ENCODE measurements at regions of chr5 and their contacts with region 1.

Region 1: GRCh38 chr5:6377905-6378765 is at the start of gene MED10:
- DNase-seq: peak; percentile 79 to 97
- H3K4me3 ChIP-seq: peak within 1 kb of the TSS; percentile 80 to 86
- H3K27ac ChIP-seq: peak within 1 kb of the TSS; percentile 84 to 95
- H3K4me1 ChIP-seq: peaks cover 4 to 12% of the 10 kb centered on the region in 2 donors
- H3K27me3 ChIP-seq: no peaks in the 10 kb centered on the region
- CTCF ChIP-seq: no peak
- total RNA-seq, gene MED10: 2.9 TPM

Region 2: GRCh38 chr5:5492087-5492933 is 885.8 kb before region 1 on chr5:
- intact Hi-C with region 1: loop called (anchors 5 kb)
- DNase-seq: no peak
- H3K4me3 ChIP-seq: no peak overlapping the region
- H3K27ac ChIP-seq: no peak overlapping the region
- H3K4me1 ChIP-seq: no peaks in the 10 kb centered on the region
- H3K27me3 ChIP-seq: no peaks in the 10 kb centered on the region
- CTCF ChIP-seq: peak in 2 of 3 experiments; percentile 65 to 82

Region 3: DNA sequence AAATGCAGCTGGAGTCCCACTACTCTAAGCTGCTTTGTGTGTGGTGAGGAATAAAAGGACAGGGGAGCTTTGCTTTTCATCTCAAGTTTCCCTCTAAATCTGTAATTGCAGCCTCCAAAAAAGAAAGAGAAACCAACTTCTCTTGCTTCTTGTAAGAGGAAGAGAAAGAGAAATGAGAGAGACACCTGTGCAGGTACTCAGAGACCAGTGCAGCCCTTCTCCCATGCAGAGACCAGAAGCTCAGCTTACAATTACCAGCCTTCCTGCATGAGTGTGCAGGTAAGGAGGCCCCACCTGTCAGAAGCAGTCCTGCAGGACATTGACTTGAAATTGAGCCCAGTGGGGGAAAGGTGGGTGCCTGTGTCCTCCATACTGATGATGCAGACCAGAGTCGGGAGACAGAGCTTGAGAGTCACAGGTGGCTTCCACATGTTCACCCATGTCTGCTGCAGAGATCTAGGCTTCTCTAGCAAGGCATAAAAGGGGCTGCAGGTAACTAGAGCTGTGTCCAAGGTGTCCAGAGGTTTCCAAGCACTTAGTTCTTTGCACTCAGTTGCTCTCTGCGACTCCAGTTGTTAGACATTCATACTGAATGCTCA is 15.6 kb after region 1 on chr5:
- intact Hi-C with region 1: no loop called
- DNase-seq: no peak
- H3K4me3 ChIP-seq: no peak overlapping the region
- H3K27ac ChIP-seq: no peak overlapping the region
- H3K4me1 ChIP-seq: no peaks in the 10 kb centered on the region
- H3K27me3 ChIP-seq: no peaks in the 10 kb centered on the region
- CTCF ChIP-seq: no peak

Region 4: GRCh38 chr5:6448622-6449464 is 70.7 kb after region 1 on chr5 and contains the start of gene UBE2QL1:
- intact Hi-C with region 1: loop called (anchors 2 kb)
- DNase-seq: no peak
- H3K4me3 ChIP-seq: peak within 1 kb of the TSS; percentile 67 to 72
- H3K27ac ChIP-seq: peak within 1 kb of the TSS in 1 of 2 donors; percentile 40
- H3K4me1 ChIP-seq: peaks cover 0 to 14% of the 10 kb centered on the region in 2 donors
- H3K27me3 ChIP-seq: no peaks in the 10 kb centered on the region
- CTCF ChIP-seq: no peak
- total RNA-seq, gene UBE2QL1: 0.85 TPM

Region 5: GRCh38 chr5:6535594-6535993 is 157.5 kb after region 1 on chr5:
- intact Hi-C with region 1: no loop called
- DNase-seq: no peak
- H3K4me3 ChIP-seq: no peak overlapping the region
- H3K27ac ChIP-seq: no peak overlapping the region
- H3K4me1 ChIP-seq: peaks cover 0 to under 1% of the 10 kb centered on the region in 2 donors
- H3K27me3 ChIP-seq: no peaks in the 10 kb centered on the region
- CTCF ChIP-seq: no peak

Region 6: GRCh38 chr5:6576861-6577501 is 198.8 kb after region 1 on chr5:
- intact Hi-C with region 1: loop called (anchors 2 kb)
- DNase-seq: no peak
- H3K4me3 ChIP-seq: no peak overlapping the region
- H3K27ac ChIP-seq: peak overlapping the region; percentile 10 to 78
- H3K4me1 ChIP-seq: peaks cover 4 to 6% of the 10 kb centered on the region in 2 donors
- H3K27me3 ChIP-seq: no peaks in the 10 kb centered on the region
- CTCF ChIP-seq: peak; percentile 14 to 71 (median 42)

Region 7: GRCh38 chr5:6642655-6643054 is 264.5 kb after region 1 on chr5:
- intact Hi-C with region 1: no loop called
- DNase-seq: no peak
- H3K4me3 ChIP-seq: no peak overlapping the region
- H3K27ac ChIP-seq: no peak overlapping the region
- H3K4me1 ChIP-seq: no peaks in the 10 kb centered on the region
- H3K27me3 ChIP-seq: no peaks in the 10 kb centered on the region
- CTCF ChIP-seq: no peak

Region 8: GRCh38 chr5:6745706-6746222 is 367.6 kb after region 1 on chr5:
- intact Hi-C with region 1: loop called (anchors 10 kb)
- DNase-seq: peak in 1 of 2 donors; percentile 61
- H3K4me3 ChIP-seq: no peak overlapping the region
- H3K27ac ChIP-seq: peak overlapping the region in 1 of 2 donors; percentile 42
- H3K4me1 ChIP-seq: peaks cover 0 to 3% of the 10 kb centered on the region in 2 donors
- H3K27me3 ChIP-seq: no peaks in the 10 kb centered on the region
- CTCF ChIP-seq: peak; percentile 66 to 77 (median 67)